ENCODE measurements at regions of chr13 and their contacts with region 1.

Region 1: GRCh38 chr13:111066544-111066943 is 48.6 kb upstream of the ARHGEF7 start:
- DNase-seq: no peak
- H3K4me3 ChIP-seq: no peak overlapping the region
- CTCF ChIP-seq: no peak
- POLR2A ChIP-seq: no peak

Region 2: GRCh38 chr13:111006506-111007031 is 60.0 kb before region 1 on chr13:
- intact Hi-C with region 1: no loop called
- DNase-seq: peak; percentile 61 to 92
- H3K4me3 ChIP-seq: no peak overlapping the region
- CTCF ChIP-seq: no peak
- POLR2A ChIP-seq: no peak

Region 3: GRCh38 chr13:111219950-111220349 is 153.4 kb after region 1 on chr13:
- intact Hi-C with region 1: loop called (anchors 5 kb)
- DNase-seq: no peak
- H3K4me3 ChIP-seq: no peak overlapping the region
- CTCF ChIP-seq: no peak
- POLR2A ChIP-seq: no peak